B cell (primary cell): ENCODE measurements at regions of chr20 and their contacts with region 1.

Region 1: GRCh38 chr20:46022411-46023147 is 6.4 kb upstream of the SLC12A5 start:
- DNase-seq: peak; percentile 80
- ATAC-seq: peak; percentile 74
- H3K4me3 ChIP-seq: peak overlapping the region in 3 of 5 experiments; percentile 25 to 54 (median 27)
- H3K4me3 Mint-ChIP-seq: peak overlapping the region; percentile 64
- H3K27ac ChIP-seq: no peak overlapping the region
- H3K27ac Mint-ChIP-seq: no peak overlapping the region
- H3K4me1 ChIP-seq: peaks cover 24 to 26% of the 10 kb centered on the region in 2 donors
- H3K4me1 Mint-ChIP-seq: peaks cover 23% of the 10 kb centered on the region
- H3K27me3 ChIP-seq: peaks cover 0 to 68% (median 25%) of the 10 kb centered on the region in 4 experiments
- H3K27me3 Mint-ChIP-seq: peaks cover 39% of the 10 kb centered on the region
- CTCF ChIP-seq: peak; percentile 79

Region 2: DNA sequence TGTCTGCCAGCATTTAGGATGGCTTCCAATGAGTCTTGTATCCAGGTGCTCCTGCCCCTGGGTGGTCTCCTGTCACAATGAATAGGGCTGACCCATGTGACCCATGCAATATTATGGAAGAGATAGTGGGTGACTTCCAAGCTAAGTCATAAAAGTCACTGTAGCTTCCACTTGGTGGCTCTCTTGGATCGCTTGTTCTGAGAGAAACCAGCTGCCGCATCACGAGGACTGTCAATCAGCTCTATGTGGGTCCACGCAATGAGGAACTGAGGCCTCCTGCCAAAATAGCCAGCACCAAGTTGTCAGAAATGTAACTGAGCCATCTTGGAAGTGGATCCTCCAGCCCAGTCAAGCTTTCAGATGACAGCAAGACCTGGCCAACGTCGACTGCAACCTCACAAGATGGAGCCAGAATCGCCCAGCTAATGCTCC is 699.6 kb before region 1 on chr20:
- CTCF ChIA-PET with region 1: no interaction called
- POLR2A ChIA-PET with region 1: no interaction called
- intact Hi-C with region 1: no loop called
- DNase-seq: peak; percentile 70
- ATAC-seq: peak; percentile 23
- H3K4me3 ChIP-seq: no peak overlapping the region
- H3K4me3 Mint-ChIP-seq: no peak overlapping the region
- H3K27ac ChIP-seq: no peak overlapping the region
- H3K27ac Mint-ChIP-seq: peak overlapping the region; percentile 15
- H3K4me1 ChIP-seq: peaks cover 28 to 41% of the 10 kb centered on the region in 2 donors
- H3K4me1 Mint-ChIP-seq: peaks cover 23% of the 10 kb centered on the region
- H3K27me3 ChIP-seq: peaks cover 0 to 3% (median 0%) of the 10 kb centered on the region in 4 experiments
- H3K27me3 Mint-ChIP-seq: no peaks in the 10 kb centered on the region
- CTCF ChIP-seq: no peak

Region 3: DNA sequence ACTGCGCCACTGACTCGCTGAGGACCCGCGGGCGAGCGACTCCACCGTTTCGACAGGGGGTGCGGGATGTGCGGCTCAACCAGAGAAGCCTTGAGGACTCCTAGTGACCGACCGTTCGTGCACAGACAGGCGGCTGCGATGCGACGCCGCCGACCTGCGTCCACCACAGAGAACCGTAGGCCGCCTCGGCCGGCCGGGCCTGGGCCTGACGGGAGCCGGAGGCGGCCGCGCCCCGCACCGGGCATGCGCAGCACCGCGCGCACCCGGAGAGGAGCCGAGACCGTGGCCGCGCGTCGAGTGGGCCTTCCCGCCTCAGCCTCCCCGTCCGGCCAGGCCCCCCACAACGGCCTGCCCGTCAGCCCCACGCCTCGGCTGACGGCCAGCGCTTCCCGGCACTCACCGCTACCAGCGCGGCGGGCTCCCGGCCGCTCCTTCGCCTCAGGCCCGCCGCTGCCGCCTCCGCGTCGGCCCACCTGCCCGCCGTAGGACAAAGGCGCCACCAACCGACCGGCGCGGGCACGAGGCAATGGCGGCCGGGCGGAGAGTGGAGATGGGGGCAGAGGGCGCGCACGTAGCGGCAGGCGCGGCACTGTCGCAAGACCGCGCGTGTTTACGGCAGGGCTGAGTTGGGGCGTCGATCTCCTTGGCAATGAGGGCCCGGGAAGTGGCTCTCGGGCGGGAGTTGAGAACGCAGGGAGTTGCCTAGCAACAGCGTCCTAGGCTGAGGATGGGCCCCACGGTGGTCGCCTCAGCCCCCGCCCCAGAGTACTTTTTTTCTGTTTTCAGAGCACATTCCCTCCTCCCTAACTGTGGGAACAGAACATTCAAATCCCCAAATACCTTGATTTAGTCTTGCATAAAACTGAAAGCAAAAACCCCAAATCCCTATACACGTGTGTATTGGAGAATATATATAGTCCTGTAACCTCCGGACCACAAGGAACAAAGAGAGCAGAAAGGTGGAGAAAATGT is 67.1 kb after region 1 on chr20 and contains the start of gene NCOA5:
- CTCF ChIA-PET with region 1: interaction called, 8 read pairs
- POLR2A ChIA-PET with region 1: no interaction called
- intact Hi-C with region 1: loop called (anchors 2 kb)
- DNase-seq: peak; percentile 97
- ATAC-seq: peak; percentile 92
- H3K4me3 ChIP-seq: peak within 1 kb of the TSS; percentile 71 to 86 (median 81)
- H3K4me3 Mint-ChIP-seq: peak within 1 kb of the TSS; percentile 93
- H3K27ac ChIP-seq: peak within 1 kb of the TSS; percentile 71 to 94
- H3K27ac Mint-ChIP-seq: peak within 1 kb of the TSS; percentile 90
- H3K4me1 ChIP-seq: peaks cover 21 to 38% of the 10 kb centered on the region in 2 donors
- H3K4me1 Mint-ChIP-seq: peaks cover 47% of the 10 kb centered on the region
- H3K27me3 ChIP-seq: no peaks in the 10 kb centered on the region
- H3K27me3 Mint-ChIP-seq: no peaks in the 10 kb centered on the region
- CTCF ChIP-seq: peak; percentile 32
- total RNA-seq, gene NCOA5: 41.6 and 44.1 TPM in 2 replicates

Region 4: GRCh38 chr20:46108435-46108841 is 85.9 kb after region 1 on chr20:
- CTCF ChIA-PET with region 1: interaction called, 4 read pairs
- POLR2A ChIA-PET with region 1: no interaction called
- intact Hi-C with region 1: loop called (anchors 5 kb)
- DNase-seq: peak; percentile 89
- ATAC-seq: peak; percentile 90
- H3K4me3 ChIP-seq: peak overlapping the region in 1 of 5 experiments; percentile 11
- H3K4me3 Mint-ChIP-seq: peak overlapping the region; percentile 59
- H3K27ac ChIP-seq: peak overlapping the region; percentile 85 to 89
- H3K27ac Mint-ChIP-seq: peak overlapping the region; percentile 86
- H3K4me1 ChIP-seq: peaks cover 43 to 44% of the 10 kb centered on the region in 2 donors
- H3K4me1 Mint-ChIP-seq: peaks cover 48% of the 10 kb centered on the region
- H3K27me3 ChIP-seq: no peaks in the 10 kb centered on the region
- H3K27me3 Mint-ChIP-seq: no peaks in the 10 kb centered on the region
- CTCF ChIP-seq: peak; percentile 38

Region 5: GRCh38 chr20:46132705-46133120 is 110.1 kb after region 1 on chr20:
- CTCF ChIA-PET with region 1: interaction called, 6 read pairs
- POLR2A ChIA-PET with region 1: no interaction called
- intact Hi-C with region 1: loop called (anchors 2 kb)
- DNase-seq: peak; percentile 78
- ATAC-seq: peak; percentile 83
- H3K4me3 ChIP-seq: no peak overlapping the region
- H3K4me3 Mint-ChIP-seq: peak overlapping the region; percentile 4
- H3K27ac ChIP-seq: no peak overlapping the region
- H3K27ac Mint-ChIP-seq: peak overlapping the region; percentile 33
- H3K4me1 ChIP-seq: peaks cover 20 to 42% of the 10 kb centered on the region in 2 donors
- H3K4me1 Mint-ChIP-seq: peaks cover 48% of the 10 kb centered on the region
- H3K27me3 ChIP-seq: peaks cover 0 to 10% (median 0%) of the 10 kb centered on the region in 4 experiments
- H3K27me3 Mint-ChIP-seq: peaks cover 15% of the 10 kb centered on the region
- CTCF ChIP-seq: peak; percentile 87

Region 6: GRCh38 chr20:46174469-46175128 is 152.0 kb after region 1 on chr20:
- CTCF ChIA-PET with region 1: interaction called, 61 read pairs
- POLR2A ChIA-PET with region 1: no interaction called
- intact Hi-C with region 1: loop called (anchors 1 kb)
- DNase-seq: peak; percentile 85
- ATAC-seq: peak; percentile 96
- H3K4me3 ChIP-seq: no peak overlapping the region
- H3K4me3 Mint-ChIP-seq: no peak overlapping the region
- H3K27ac ChIP-seq: no peak overlapping the region
- H3K27ac Mint-ChIP-seq: no peak overlapping the region
- H3K4me1 ChIP-seq: peaks cover 4 to 16% of the 10 kb centered on the region in 2 donors
- H3K4me1 Mint-ChIP-seq: no peaks in the 10 kb centered on the region
- H3K27me3 ChIP-seq: peaks cover 0 to 45% (median 32%) of the 10 kb centered on the region in 4 experiments
- H3K27me3 Mint-ChIP-seq: peaks cover 58% of the 10 kb centered on the region
- CTCF ChIP-seq: peak; percentile 70

Region 7: DNA sequence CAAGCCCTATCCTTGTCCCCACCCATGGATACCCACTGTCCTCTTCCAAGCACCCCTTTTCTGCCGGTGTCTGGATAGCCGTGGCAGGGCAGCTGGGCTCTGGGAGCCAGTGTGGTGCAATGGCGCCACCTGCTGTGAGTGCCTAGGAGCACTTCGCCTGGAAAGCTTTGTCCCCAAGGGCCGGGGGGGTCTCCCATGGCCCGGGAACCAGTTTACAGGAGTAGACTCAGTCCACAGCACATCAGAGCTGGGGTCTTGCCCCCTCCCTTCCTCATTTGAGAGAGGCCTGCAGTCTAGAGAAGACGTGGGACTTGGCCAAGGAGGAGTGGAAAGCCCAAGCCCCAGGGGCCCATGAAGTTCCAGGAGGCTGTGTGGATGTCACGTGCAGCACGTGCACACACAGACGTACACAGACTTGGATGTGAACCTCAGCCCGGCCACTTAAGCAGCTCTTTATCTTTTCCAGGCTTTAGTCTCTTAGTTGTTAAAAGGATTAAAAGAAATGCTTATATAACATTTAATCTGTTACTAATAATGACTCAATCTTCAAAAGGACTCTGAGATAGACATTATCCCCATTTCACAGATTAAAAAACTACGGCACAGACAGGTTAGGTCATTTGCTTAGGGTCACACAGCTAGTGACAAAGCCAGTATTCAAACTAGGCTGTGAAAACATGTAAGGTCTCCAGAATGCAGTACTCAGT is 326.6 kb after region 1 on chr20:
- CTCF ChIA-PET with region 1: interaction called, 11 read pairs
- POLR2A ChIA-PET with region 1: no interaction called
- intact Hi-C with region 1: loop called (anchors 10 kb)
- DNase-seq: peak; percentile 45
- ATAC-seq: peak; percentile 28
- H3K4me3 ChIP-seq: no peak overlapping the region
- H3K4me3 Mint-ChIP-seq: no peak overlapping the region
- H3K27ac ChIP-seq: no peak overlapping the region
- H3K27ac Mint-ChIP-seq: peak overlapping the region; percentile 65
- H3K4me1 ChIP-seq: peaks cover 9 to 25% of the 10 kb centered on the region in 2 donors
- H3K4me1 Mint-ChIP-seq: peaks cover 27% of the 10 kb centered on the region
- H3K27me3 ChIP-seq: no peaks in the 10 kb centered on the region
- H3K27me3 Mint-ChIP-seq: no peaks in the 10 kb centered on the region
- CTCF ChIP-seq: peak; percentile 63

Region 8: GRCh38 chr20:46363800-46364634 is 341.4 kb after region 1 on chr20:
- CTCF ChIA-PET with region 1: no interaction called
- POLR2A ChIA-PET with region 1: no interaction called
- intact Hi-C with region 1: no loop called
- DNase-seq: peak; percentile 91
- ATAC-seq: peak; percentile 84
- H3K4me3 ChIP-seq: peak overlapping the region; percentile 64 to 97 (median 95)
- H3K4me3 Mint-ChIP-seq: peak overlapping the region; percentile 91
- H3K27ac ChIP-seq: peak overlapping the region; percentile 98 to 100
- H3K27ac Mint-ChIP-seq: peak overlapping the region; percentile 83
- H3K4me1 ChIP-seq: peaks cover 38 to 48% of the 10 kb centered on the region in 2 donors
- H3K4me1 Mint-ChIP-seq: peaks cover 48% of the 10 kb centered on the region
- H3K27me3 ChIP-seq: no peaks in the 10 kb centered on the region
- H3K27me3 Mint-ChIP-seq: no peaks in the 10 kb centered on the region
- CTCF ChIP-seq: no peak

Region 9: DNA sequence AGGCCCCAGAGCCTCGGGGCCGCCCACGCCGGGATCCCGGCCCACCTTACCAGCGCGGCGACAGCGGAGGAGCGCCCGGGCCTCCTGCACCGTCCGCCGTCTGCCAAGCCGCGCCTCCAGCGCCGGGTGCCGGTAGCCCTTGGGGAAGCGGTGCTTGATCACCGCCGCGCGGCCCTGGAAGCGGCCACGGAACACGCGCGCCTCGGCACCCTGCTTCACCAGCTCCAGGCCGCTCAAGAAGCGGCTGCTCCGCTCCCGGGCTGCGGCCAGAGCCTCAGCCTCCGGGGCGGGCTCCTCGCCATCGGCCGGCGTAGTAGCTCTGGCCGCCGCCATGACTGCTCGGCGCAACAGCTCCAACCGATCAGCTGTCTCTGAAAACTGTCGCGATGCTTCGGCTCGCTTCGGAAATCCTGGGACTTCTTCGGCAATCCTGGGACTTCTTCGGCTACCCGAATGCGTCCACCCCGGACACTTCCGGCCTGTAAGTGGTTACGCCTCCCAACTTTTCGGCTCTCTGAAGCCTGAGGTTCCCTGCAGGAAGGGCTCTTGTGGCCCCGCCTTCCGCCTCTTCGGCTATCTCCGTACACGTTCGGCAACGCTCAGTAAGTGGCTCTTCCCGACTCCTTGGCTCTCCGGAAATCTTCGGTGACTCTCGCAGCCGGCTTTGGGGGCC is 666.6 kb after region 1 on chr20 and contains the start of gene TP53RK:
- CTCF ChIA-PET with region 1: no interaction called
- POLR2A ChIA-PET with region 1: no interaction called
- intact Hi-C with region 1: loop called (anchors 5 kb)
- DNase-seq: peak; percentile 97
- ATAC-seq: peak; percentile 97
- H3K4me3 ChIP-seq: peak within 1 kb of the TSS; percentile 87 to 95 (median 93)
- H3K4me3 Mint-ChIP-seq: peak within 1 kb of the TSS; percentile 99
- H3K27ac ChIP-seq: peak within 1 kb of the TSS; percentile 76 to 80
- H3K27ac Mint-ChIP-seq: peak within 1 kb of the TSS; percentile 98
- H3K4me1 ChIP-seq: peaks cover 20 to 21% of the 10 kb centered on the region in 2 donors
- H3K4me1 Mint-ChIP-seq: peaks cover 40% of the 10 kb centered on the region
- H3K27me3 ChIP-seq: no peaks in the 10 kb centered on the region
- H3K27me3 Mint-ChIP-seq: no peaks in the 10 kb centered on the region
- CTCF ChIP-seq: peak; percentile 34
- total RNA-seq, gene TP53RK: 22.5 and 24.0 TPM in 2 replicates